Right ventricle myocardium inferior (tissue), 1 donor: ENCODE measurements at regions of chr3 and their contacts with region 1.

Region 1: GRCh38 chr3:196287440-196288148 is at the start of gene PCYT1A:
- DNase-seq: peak; percentile 97
- ATAC-seq: peak; percentile 97
- total RNA-seq, gene PCYT1A: 103 TPM

Region 2: DNA sequence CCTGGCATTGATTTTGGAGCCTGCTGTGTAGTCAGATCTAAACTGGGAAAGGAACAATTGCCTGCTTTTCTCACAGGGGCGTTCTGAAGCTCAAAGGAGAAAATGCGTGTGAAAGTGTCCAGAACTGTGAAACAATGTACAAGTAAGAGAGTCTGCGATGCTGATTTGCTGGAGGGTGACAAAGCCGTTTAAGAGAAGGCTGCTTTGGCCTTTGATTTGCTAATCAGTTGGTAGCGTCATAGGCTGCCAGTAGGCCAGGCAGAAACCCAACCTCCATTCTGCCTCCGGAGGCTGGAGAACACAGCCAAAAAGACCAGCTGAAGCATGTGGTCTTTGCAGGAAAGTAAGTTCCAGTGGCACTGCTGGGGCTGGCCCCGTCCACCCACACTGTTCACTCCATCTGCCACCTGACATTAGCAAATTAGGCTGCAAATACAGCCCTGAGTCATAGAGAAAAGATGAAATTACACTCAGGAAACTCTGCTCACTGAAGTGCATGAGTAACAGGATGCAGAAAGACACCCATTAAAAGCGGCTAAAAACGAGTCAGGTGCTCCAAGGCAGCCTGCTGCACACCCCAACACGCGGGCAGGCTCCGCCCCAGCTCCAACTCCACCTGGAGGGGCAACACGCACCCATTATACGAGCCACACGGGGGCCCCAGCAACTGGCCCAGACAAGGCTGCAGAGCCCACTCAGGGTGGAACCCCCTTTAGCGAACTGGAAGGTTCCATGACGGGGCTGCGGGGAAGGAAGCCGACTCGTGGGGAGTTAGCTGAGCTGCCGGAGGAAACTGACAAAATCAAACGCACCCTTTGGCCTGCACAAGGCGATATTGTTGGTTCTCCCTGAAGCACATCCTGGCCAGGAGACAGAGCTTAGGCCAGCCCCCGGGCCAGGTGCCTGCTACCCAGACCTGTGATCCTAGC is 108.0 kb before region 1 on chr3:
- intact Hi-C with region 1: no loop called
- DNase-seq: no peak
- ATAC-seq: no peak

Region 3: DNA sequence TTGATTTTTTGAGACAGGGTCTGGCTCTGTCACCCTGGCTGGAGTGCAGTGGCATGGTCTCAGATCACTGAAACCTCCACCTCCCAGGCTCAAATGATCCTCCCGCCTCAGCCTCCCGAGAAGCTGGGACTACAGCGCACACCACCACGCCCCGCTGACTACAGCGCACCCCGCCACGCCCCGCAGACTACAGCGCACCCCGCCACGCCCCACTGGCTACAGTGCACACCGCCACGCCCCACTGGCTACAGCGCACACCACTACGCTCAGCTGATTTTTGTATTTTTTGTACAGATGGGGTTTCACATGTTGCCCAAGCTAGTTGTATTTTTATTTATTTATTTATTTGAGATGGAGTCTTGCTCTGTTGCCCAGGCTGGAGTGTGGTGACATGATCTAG is 35.7 kb before region 1 on chr3:
- intact Hi-C with region 1: loop called (anchors 2 kb)
- DNase-seq: no peak
- ATAC-seq: no peak

Region 4: GRCh38 chr3:196298521-196298920 is 10.9 kb after region 1 on chr3:
- intact Hi-C with region 1: no loop called
- DNase-seq: no peak
- ATAC-seq: no peak

Region 5: GRCh38 chr3:196317687-196318467 is 30.3 kb after region 1 on chr3 and contains the start of gene DYNLT2B:
- intact Hi-C with region 1: loop called (anchors 1 kb)
- DNase-seq: peak; percentile 94
- ATAC-seq: peak; percentile 99
- total RNA-seq, gene DYNLT2B: 2.9 TPM

Region 6: DNA sequence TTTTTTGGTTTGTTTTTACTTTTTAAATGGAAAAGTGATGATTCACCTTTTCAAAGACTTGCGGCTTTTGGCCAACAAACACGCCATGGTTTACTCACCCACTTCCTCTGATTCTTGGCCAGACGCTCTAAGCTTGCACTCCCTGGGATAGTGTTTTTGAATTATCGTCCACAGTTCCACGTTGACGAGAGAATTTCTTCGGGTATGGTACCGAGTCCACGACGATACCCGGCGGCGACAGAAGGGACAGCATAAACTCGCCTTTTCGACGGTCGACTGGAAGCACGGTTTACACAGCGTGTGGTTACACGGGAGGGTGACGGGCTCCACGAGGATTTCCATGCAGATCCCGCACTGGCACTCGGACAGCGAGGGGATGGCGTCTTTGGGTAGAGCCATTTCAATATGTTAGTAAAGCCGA is 215.2 kb after region 1 on chr3:
- intact Hi-C with region 1: loop called (anchors 1 kb)
- DNase-seq: no peak
- ATAC-seq: peak; percentile 46

Region 7: GRCh38 chr3:196518966-196519717 is 231.5 kb after region 1 on chr3:
- intact Hi-C with region 1: no loop called
- DNase-seq: no peak
- ATAC-seq: peak; percentile 43